AG04449 (cell line): ENCODE measurements at regions of chr5 and their contacts with region 1.

Region 1: DNA sequence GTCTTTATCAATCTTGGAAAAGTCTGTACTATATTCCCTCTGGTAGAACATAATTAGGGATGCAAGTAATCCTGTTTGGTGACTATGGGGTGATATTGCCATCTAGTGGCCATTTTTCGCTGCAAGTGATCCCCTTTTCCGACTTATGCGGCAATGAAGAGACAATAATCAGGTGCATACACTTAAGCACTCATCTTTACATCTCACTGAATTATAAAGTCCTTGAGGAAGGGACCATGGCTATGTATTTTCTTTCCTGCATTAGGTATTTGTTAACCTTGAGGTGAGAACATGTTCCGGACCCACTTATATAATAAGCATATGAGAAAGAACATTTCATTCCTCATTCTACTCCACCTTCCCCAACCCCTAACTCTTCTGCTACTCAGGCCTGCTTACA is 19.6 kb upstream of the LIX1 start:
- DNase-seq: peak; percentile 16
- H3K4me3 ChIP-seq: no peak overlapping the region
- CTCF ChIP-seq: peak; percentile 72

Region 2: GRCh38 chr5:96752341-96753016 is 409.6 kb before region 1 on chr5:
- CTCF ChIA-PET with region 1: interaction called, 80 read pairs
- POLR2A ChIA-PET with region 1: no interaction called
- DNase-seq: no peak
- H3K4me3 ChIP-seq: no peak overlapping the region
- CTCF ChIP-seq: peak; percentile 35

Region 3: GRCh38 chr5:96807075-96807654 is 354.9 kb before region 1 on chr5:
- CTCF ChIA-PET with region 1: interaction called, 10 read pairs
- POLR2A ChIA-PET with region 1: no interaction called
- DNase-seq: no peak
- H3K4me3 ChIP-seq: peak overlapping the region; percentile 89
- CTCF ChIP-seq: no peak

Region 4: DNA sequence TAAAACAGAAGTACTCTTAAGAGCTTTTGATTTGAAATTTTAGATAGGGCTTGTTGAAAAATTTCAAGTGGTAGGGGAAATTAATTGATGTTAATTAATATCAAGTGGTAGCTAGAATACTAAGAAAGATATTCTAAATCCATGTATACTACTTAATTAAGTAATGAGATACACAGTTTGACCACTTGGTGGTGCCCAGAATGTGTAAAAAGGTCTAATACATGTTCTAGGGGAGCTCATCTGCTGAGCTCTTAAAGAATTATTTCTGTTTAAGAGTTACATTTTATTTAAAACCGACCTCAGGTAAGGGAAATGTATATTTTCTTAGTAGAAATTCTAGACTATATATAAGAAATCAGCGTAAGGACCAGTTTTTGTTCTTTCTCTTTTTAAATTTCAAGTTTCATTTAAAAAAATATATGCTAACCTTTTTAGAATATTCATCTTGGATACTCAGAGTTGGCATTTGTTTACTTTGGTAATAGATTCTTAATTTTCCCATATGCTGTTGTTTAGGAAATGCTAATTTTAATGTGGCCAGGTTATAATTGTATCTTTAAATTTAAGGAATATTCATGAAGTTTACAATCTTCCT is 164.7 kb before region 1 on chr5:
- CTCF ChIA-PET with region 1: interaction called, 113 read pairs
- POLR2A ChIA-PET with region 1: no interaction called
- DNase-seq: no peak
- H3K4me3 ChIP-seq: no peak overlapping the region
- CTCF ChIP-seq: peak; percentile 45

Region 5: GRCh38 chr5:97017861-97018260 is 144.2 kb before region 1 on chr5:
- CTCF ChIA-PET with region 1: interaction called, 10 read pairs
- POLR2A ChIA-PET with region 1: no interaction called
- DNase-seq: no peak
- H3K4me3 ChIP-seq: no peak overlapping the region
- CTCF ChIP-seq: no peak

Region 6: GRCh38 chr5:97149709-97150108 is 12.3 kb before region 1 on chr5:
- CTCF ChIA-PET with region 1: interaction called, 54 read pairs
- POLR2A ChIA-PET with region 1: no interaction called
- DNase-seq: no peak
- H3K4me3 ChIP-seq: no peak overlapping the region
- CTCF ChIP-seq: no peak